Posterior vena cava (tissue), 2 donors: ENCODE measurements at regions of chr3 and their contacts with region 1.

Region 1: GRCh38 chr3:168558728-168559411 is 463.1 kb upstream of the GOLIM4 start:
- DNase-seq: no peak

Region 2: DNA sequence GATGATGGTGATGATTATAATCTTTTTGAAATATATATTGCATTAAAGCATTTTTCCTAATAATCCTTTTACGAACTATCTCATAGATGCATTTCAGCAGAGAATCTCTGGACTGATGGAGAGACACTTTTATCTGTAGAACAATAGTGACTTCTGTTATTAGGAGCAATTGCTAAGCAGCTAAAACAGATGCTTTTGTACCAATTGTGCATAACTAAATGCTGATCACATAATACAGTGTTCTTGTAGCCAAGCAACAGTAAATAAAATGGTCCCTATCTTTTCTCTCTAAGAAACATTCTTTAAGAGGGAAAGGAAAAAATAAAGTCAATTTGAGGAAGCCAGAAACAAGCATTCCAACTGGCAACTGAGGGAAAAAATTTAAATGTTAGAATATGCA is 57.3 kb before region 1 on chr3:
- intact Hi-C with region 1: no loop called
- DNase-seq: no peak

Region 3: DNA sequence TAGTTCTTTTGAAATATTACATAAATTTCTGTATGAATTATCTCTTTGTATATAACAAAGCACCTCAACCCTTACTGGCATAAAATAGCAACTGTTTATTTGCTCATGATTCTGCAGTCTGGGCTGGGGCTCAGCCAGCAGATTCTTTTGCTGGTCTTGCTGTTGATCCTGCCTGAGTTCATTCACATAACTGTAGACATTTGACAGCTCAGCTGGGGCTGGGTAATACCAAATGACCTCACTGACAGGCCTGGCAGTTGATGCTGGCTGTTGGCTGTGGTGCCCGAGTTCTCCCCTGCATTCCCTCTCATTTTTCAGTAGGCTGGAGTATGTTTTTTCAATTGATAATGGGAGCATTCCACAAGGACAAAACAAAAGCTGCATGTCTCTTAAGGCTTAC is 13.3 kb before region 1 on chr3:
- intact Hi-C with region 1: loop called in 1 of 2 experiments (anchors 1 kb)
- DNase-seq: no peak